ENCODE measurements at regions of chr10 and their contacts with region 1.

Region 1: GRCh38 chr10:14959276-14960057 is at the start of gene MEIG1:
- DNase-seq: peak; percentile 94
- H3K4me3 ChIP-seq: peak within 1 kb of the TSS; percentile 56 to 71 (median 66)
- H3K27ac ChIP-seq: peak within 1 kb of the TSS; percentile 91 to 99 (median 96)
- H3K4me1 ChIP-seq: peaks cover 0 to 15% (median 10%) of the 10 kb centered on the region in 4 donors
- H3K27me3 ChIP-seq: no peaks in the 10 kb centered on the region
- CTCF ChIP-seq: no peak
- EP300 ChIP-seq: no peak
- POLR2A ChIP-seq: peak; percentile 69
- total RNA-seq, gene MEIG1: not detected

Region 2: DNA sequence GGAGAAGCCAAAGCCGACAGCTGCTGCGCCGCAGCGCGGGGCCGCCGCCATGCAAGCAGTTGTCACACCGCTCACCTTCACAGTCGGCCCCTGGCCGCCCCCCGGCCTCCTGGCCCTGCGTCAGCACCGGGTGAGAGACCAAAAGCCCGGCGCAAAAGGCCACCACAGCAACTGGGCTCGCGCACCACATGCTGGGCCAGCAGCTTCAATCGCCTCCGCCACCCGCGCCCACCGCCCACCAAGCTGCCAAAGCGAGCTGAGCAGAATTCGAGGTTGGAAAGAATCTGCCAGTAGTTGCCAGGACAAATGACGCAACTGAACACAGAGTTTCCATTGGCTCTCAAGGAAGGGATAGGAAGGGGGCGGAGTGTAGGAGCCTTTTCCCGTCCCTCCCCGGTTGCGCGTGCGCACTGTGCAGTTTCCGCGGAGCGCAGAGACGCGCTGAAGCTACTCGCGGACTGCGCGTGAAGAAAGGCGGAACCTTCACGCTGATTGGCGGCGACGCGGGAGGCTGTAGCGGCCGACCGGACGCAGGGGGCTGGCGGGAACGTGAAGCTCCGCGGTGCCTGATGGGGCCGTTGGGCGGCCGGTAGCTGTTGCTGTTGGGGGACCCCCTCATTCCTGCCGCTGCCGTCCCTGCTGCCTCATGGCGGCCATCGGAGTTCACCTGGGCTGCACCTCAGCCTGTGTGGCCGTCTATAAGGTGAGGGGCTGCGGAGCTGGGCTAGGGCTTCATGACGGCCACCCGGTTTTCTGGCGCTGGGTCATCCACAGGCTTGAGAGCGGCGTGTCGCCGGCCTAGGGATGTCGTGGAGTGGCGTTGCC is 121.5 kb before region 1 on chr10 and contains the starts of genes CDNF, HSPA14 and MSANTD7:
- in situ Hi-C with region 1: loop called in 1 of 4 experiments (anchors 25 kb)
- intact Hi-C with region 1: no loop called
- DNase-seq: peak; percentile 100
- H3K4me3 ChIP-seq: peak within 1 kb of the TSS; percentile 81 to 98 (median 93)
- H3K27ac ChIP-seq: peak within 1 kb of the TSS; percentile 95 to 98 (median 96)
- H3K4me1 ChIP-seq: peaks cover 0 to 34% (median 21%) of the 10 kb centered on the region in 4 donors
- H3K27me3 ChIP-seq: no peaks in the 10 kb centered on the region
- CTCF ChIP-seq: peak in 2 of 5 experiments; percentile 12 to 34
- EP300 ChIP-seq: no peak
- POLR2A ChIP-seq: peak; percentile 92
- total RNA-seq, gene CDNF: 2.2 to 2.5 TPM in 2 of 4 donors, not detected in the others
- total RNA-seq, gene HSPA14: 6.7 to 15.4 (median 8.7) TPM
- total RNA-seq, gene MSANTD7: 11.5 to 19.8 (median 14.0) TPM